ENCODE measurements at regions of chr14 and their contacts with region 1.

Region 1: GRCh38 chr14:65704850-65705249 is 292.3 kb downstream of the FUT8 start:
- DNase-seq: no peak
- ATAC-seq: no peak
- H3K4me3 ChIP-seq: no peak overlapping the region
- H3K4me3 Mint-ChIP-seq: no peak overlapping the region
- H3K27ac ChIP-seq: no peak overlapping the region
- H3K27ac Mint-ChIP-seq: no peak overlapping the region
- H3K4me1 ChIP-seq: no peaks in the 10 kb centered on the region
- H3K4me1 Mint-ChIP-seq: peaks cover 12% of the 10 kb centered on the region
- H3K27me3 ChIP-seq: no peaks in the 10 kb centered on the region
- H3K27me3 Mint-ChIP-seq: no peaks in the 10 kb centered on the region
- CTCF ChIP-seq: no peak

Region 2: GRCh38 chr14:65745396-65746190 is 40.7 kb after region 1 on chr14:
- CTCF ChIA-PET with region 1: no interaction called
- POLR2A ChIA-PET with region 1: no interaction called
- intact Hi-C with region 1: loop called in 1 of 2 experiments (anchors 5 kb)
- DNase-seq: no peak
- ATAC-seq: no peak
- H3K4me3 ChIP-seq: no peak overlapping the region
- H3K4me3 Mint-ChIP-seq: no peak overlapping the region
- H3K27ac ChIP-seq: no peak overlapping the region
- H3K27ac Mint-ChIP-seq: no peak overlapping the region
- H3K4me1 ChIP-seq: no peaks in the 10 kb centered on the region
- H3K4me1 Mint-ChIP-seq: no peaks in the 10 kb centered on the region
- H3K27me3 ChIP-seq: no peaks in the 10 kb centered on the region
- H3K27me3 Mint-ChIP-seq: no peaks in the 10 kb centered on the region
- CTCF ChIP-seq: no peak

Region 3: DNA sequence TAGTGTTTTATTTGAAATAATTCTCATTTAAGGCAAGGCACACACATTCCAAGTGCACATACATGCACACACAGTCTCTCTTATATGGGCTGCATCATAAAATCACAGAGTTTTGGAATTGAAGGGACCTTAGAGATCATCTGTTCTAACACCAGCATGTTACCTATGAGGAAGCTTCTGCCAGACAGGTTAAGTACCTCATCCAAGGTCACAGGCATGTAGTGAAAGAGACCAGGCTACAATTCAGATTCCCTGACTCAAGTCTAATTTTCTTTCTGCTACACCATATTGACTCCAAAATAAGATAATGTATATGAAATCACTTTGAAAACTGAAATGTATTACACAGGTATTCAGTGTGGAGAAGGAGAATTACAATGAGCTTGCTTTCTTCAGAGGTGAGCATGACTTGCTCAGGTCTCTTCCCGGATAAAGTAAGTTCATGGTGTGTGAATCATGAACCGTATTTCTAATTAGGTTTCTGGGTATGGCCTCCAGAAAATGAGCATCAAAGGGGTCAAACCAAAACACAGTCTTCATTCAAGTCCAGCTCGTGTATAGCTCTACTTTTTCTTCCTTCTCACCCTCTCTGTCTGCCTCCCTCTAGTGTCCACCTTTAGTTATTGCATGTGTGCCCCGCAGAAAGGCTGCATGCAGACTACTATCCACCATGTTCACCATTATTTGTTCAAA is 119.6 kb after region 1 on chr14:
- CTCF ChIA-PET with region 1: no interaction called
- POLR2A ChIA-PET with region 1: no interaction called
- intact Hi-C with region 1: no loop called
- DNase-seq: peak; percentile 29 to 82 (median 42)
- ATAC-seq: peak; percentile 97
- H3K4me3 ChIP-seq: no peak overlapping the region
- H3K4me3 Mint-ChIP-seq: no peak overlapping the region
- H3K27ac ChIP-seq: no peak overlapping the region
- H3K27ac Mint-ChIP-seq: no peak overlapping the region
- H3K4me1 ChIP-seq: peaks cover 3% of the 10 kb centered on the region
- H3K4me1 Mint-ChIP-seq: peaks cover 13% of the 10 kb centered on the region
- H3K27me3 ChIP-seq: no peaks in the 10 kb centered on the region
- H3K27me3 Mint-ChIP-seq: no peaks in the 10 kb centered on the region
- CTCF ChIP-seq: peak; percentile 93

Measured in CD4-positive, alpha-beta T cell (primary cell).